MCF 10A (cell line): ENCODE measurements at regions of chr10 and their contacts with region 1.

Region 1: DNA sequence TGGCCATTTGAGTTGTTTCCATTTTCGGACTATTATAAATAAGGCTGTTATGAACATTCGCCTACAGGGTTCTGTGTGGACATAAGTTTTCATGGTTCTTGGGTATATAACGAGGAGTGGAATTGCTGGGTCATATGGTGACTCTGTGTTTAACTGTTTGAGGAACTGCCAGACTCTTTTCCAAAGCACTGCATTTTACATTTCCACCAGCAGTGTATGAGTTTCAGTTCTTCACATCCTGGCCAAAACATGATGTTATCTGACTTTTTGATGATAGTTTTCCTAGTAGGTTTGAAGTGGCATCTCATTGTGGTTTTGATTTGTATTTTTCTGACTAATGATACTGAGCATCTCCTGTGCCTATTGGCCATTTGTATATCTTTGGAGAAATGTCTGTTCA is 5.4 kb downstream of the SUV39H2 start:
- DNase-seq: no peak
- H3K4me3 Mint-ChIP-seq: no peak overlapping the region
- H3K27ac Mint-ChIP-seq: no peak overlapping the region
- H3K4me1 Mint-ChIP-seq: peaks cover 14% of the 10 kb centered on the region
- H3K27me3 Mint-ChIP-seq: no peaks in the 10 kb centered on the region
- CTCF ChIP-seq: no peak

Region 2: DNA sequence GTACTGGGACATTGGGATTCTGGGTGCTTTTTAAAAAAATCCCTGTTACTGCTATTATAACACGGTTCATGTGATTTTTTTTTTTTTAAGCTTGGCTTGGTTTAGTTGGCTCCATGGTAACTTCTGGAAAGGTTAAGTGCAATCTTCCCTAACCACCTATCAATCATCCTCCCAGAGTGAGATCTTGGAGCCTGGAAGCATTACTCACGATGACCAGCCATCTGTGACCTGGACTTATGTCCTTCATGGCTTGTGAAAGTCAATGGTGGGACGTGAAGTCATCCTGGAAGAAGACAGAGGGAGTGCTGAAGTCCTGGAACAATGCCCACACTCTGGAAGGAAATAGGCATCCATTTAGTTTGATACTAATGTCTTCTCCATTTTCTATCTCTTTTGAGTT is 417.8 kb before region 1 on chr10:
- CTCF ChIA-PET with region 1: no interaction called
- POLR2A ChIA-PET with region 1: no interaction called
- intact Hi-C with region 1: no loop called
- DNase-seq: peak; percentile 56
- H3K4me3 Mint-ChIP-seq: no peak overlapping the region
- H3K27ac Mint-ChIP-seq: no peak overlapping the region
- H3K4me1 Mint-ChIP-seq: no peaks in the 10 kb centered on the region
- H3K27me3 Mint-ChIP-seq: no peaks in the 10 kb centered on the region
- CTCF ChIP-seq: no peak

Region 3: DNA sequence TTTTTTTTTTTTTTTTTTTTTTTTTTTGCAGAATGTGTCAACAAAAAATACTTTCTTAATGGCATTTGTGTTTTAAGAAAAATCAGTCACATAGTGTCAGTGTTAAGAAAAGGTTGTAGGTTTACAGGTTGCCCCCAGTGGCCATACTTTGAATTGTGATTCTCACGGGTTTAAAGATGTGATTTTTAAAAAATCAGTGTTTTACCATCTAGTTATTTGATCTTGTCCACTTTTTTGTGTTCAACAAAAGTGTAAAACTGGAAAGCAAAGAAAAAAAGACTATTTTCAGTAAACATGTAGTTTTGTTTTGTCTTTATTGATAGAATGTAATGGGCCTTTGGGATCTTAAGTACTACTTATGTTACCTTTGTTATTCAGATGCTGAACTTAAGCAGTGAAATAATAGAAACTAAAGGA is 20.2 kb after region 1 on chr10:
- CTCF ChIA-PET with region 1: interaction called, 18 read pairs
- POLR2A ChIA-PET with region 1: interaction called, 17 read pairs
- intact Hi-C with region 1: no loop called
- DNase-seq: peak; percentile 39
- H3K4me3 Mint-ChIP-seq: no peak overlapping the region
- H3K27ac Mint-ChIP-seq: no peak overlapping the region
- H3K4me1 Mint-ChIP-seq: no peaks in the 10 kb centered on the region
- H3K27me3 Mint-ChIP-seq: no peaks in the 10 kb centered on the region
- CTCF ChIP-seq: peak; percentile 39